Activated CD4-positive, alpha-beta T cell treated with anti-CD3 and anti-CD28 coated beads for 36 hours (primary cell): ENCODE measurements at regions of chr17 and their contacts with region 1.

Region 1: DNA sequence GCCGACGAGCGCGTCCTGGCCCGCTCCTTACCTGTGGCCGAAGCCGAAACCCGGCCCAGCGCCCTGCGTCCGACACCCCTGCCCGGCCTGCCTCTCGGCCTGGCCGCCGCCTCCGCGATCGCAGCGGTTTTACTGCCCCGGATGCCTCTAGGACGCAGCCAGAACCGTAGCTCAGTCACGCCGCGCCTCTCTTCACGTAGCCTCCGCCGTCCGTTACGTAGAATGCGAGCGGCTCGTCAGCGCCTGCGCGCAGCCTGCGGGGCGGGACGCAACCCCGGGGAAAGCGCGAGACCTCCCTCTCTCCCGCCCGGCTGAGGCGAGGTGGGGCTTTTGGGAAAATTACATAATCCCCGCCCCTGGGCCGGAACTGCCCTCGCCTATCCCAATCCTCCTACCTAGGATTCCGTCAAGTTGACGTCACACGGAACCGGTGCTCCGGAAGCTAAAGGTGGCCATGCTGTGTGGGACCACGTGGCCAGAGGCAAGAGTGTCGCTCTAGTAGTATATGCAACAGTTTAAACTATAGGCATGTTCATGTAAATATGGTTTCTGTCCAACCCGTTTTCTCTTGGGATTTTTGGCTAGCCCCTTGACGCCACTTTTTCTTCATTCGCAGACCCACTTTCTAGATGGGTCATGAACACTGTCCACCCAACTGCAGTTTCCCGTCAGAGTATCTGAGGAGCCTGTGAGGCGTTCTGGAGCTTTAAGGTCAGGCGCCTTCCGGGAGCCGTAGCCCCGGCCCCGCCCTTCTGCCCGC is at the start of gene CCDC47:
- DNase-seq: peak; percentile 99
- ATAC-seq: peak; percentile 83
- H3K4me3 Mint-ChIP-seq: peak within 1 kb of the TSS; percentile 98
- H3K27ac Mint-ChIP-seq: peak within 1 kb of the TSS; percentile 97
- H3K4me1 Mint-ChIP-seq: peaks cover 57% of the 10 kb centered on the region
- H3K27me3 Mint-ChIP-seq: no peaks in the 10 kb centered on the region
- total RNA-seq, gene CCDC47: 76.9 to 82.3 TPM

Region 2: GRCh38 chr17:63445979-63446691 is 327.4 kb before region 1 on chr17 and contains the start of gene CYB561:
- CTCF ChIA-PET with region 1: no interaction called
- POLR2A ChIA-PET with region 1: no interaction called
- intact Hi-C with region 1: loop called in 1 of 2 experiments (anchors 5 kb)
- DNase-seq: peak; percentile 81
- ATAC-seq: peak; percentile 69
- H3K4me3 Mint-ChIP-seq: peak within 1 kb of the TSS; percentile 60
- H3K27ac Mint-ChIP-seq: peak within 1 kb of the TSS; percentile 72
- H3K4me1 Mint-ChIP-seq: peaks cover 23% of the 10 kb centered on the region
- H3K27me3 Mint-ChIP-seq: peaks cover 3% of the 10 kb centered on the region
- total RNA-seq, gene CYB561: 2.5 to 3.0 TPM

Region 3: DNA sequence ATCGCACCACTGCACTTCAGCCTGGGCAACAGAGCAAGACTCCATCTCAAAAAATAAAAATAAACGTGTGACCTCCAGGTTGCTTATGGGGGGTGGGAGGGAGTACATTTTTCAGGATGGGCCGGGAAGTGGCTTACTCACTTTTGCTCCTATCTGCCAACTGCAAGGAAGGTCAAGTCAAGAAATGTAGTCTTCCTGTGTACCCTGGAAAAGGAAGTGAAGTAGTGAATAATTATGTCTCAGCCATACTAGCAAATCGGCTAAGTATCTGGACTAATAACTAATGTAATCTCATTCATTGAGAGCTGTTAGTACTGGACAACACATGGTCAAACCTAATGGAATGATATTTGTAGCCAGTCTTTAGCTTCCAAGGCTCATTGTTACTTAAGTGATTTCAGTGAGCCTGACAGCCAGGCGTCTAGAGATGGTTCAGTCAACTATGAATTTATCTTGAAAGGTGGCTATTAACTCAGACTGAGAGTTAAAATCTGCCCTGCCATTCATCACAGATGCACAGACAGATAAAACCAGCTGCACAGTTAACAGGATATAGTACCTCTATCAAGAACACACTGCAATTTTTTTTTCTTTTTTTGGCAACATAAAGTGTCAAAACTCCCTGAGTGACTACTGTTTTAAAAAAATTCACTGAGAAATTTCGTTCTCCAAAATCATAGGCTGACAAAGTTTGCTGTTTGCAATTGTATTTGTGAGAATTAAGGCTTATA is 176.5 kb before region 1 on chr17:
- CTCF ChIA-PET with region 1: no interaction called
- POLR2A ChIA-PET with region 1: no interaction called
- intact Hi-C with region 1: no loop called
- DNase-seq: no peak
- ATAC-seq: no peak
- H3K4me3 Mint-ChIP-seq: no peak overlapping the region
- H3K27ac Mint-ChIP-seq: peak overlapping the region; percentile 13
- H3K4me1 Mint-ChIP-seq: peaks cover 29% of the 10 kb centered on the region
- H3K27me3 Mint-ChIP-seq: no peaks in the 10 kb centered on the region

Region 4: DNA sequence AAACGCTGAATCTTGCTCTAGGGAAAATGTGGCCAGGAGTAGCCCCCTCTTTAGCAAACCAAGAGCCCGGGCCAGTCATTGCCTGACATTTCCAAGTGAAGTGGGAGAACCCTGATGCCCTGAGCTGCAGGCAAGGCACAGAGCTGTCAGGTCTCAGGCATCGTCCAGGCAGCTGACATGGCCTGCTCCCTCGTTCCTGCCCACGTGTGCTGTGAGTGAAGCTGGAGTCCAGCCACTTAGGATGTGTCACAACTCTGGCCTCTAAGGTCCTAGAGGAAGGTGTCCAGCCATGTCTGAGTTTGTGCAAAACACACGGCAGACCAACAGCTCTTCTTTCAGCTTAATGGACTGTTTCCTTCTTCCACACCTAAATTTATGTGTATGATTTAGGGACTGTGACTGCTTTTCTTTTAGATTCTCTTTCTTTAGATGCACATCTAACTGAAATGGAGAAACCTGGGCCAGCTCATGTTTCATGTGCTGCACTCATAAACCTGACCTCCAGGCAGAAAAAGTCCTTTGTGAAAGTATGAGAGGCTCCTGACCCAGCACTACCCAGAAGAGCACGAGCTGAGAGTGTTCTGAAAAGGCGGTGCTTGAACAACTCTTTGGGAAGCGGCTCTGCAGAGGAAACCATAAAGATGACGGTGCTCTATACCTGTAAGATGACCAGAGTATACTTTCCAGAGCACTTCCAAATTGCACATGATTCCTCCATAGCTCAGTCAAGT is 58.8 kb before region 1 on chr17:
- CTCF ChIA-PET with region 1: no interaction called
- POLR2A ChIA-PET with region 1: no interaction called
- intact Hi-C with region 1: no loop called
- DNase-seq: no peak
- ATAC-seq: no peak
- H3K4me3 Mint-ChIP-seq: no peak overlapping the region
- H3K27ac Mint-ChIP-seq: no peak overlapping the region
- H3K4me1 Mint-ChIP-seq: peaks cover 8% of the 10 kb centered on the region
- H3K27me3 Mint-ChIP-seq: no peaks in the 10 kb centered on the region

Region 5: DNA sequence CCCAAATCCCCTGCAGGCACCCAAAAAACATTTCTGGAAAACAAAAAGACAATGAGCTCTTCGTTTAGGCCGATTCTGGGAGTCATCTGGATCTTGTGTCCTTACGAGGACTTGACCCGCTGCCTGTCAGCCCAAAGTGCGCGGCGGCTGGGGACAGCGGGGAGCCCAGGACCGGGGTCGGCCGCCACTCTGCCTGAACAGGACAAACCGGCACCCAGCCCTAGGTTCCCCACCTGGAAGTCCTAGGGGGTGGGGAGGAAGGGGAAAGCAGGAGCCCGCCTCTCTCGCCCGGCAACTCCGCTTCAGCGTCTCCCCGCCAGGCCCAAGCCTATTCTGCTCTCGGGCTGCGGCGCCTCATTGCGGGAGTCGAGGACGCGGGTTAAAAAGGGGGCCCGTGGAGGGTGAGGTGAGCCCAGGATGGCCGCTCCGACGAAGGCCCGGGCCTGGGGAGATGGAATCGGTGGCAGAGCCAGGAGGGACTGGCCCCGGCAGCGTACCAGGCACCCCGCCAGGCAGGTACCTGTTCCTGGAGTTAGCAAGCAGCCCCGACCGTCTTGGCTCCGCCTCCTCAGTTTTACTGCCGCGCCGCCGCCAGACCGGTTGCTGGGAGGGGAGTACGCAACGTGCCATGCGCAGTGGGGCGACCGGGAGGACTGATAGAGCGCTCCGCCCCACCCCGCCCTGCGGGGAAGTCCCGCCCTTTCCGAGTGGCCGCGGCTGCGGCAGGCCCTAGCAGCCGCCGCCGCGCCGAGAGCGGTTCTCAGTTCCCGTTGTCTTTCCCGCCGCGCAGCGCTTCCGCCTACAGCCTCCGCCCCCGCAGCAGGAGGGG is 32.1 kb before region 1 on chr17 and contains the start of gene STRADA:
- CTCF ChIA-PET with region 1: interaction called, 3 read pairs
- POLR2A ChIA-PET with region 1: interaction called, 16 read pairs
- intact Hi-C with region 1: loop called (anchors 1 kb)
- DNase-seq: peak; percentile 100
- ATAC-seq: peak; percentile 94
- H3K4me3 Mint-ChIP-seq: peak within 1 kb of the TSS; percentile 91
- H3K27ac Mint-ChIP-seq: peak within 1 kb of the TSS; percentile 95
- H3K4me1 Mint-ChIP-seq: peaks cover 29% of the 10 kb centered on the region
- H3K27me3 Mint-ChIP-seq: no peaks in the 10 kb centered on the region
- total RNA-seq, gene STRADA: 51.0 to 53.6 TPM

Region 6: GRCh38 chr17:63827002-63827771 is 53.6 kb after region 1 on chr17 and contains the starts of genes FTSJ3 and PSMC5:
- CTCF ChIA-PET with region 1: interaction called, 5 read pairs
- POLR2A ChIA-PET with region 1: interaction called, 10 read pairs
- intact Hi-C with region 1: loop called (anchors 1 kb)
- DNase-seq: peak; percentile 97
- ATAC-seq: peak; percentile 94
- H3K4me3 Mint-ChIP-seq: peak within 1 kb of the TSS; percentile 88
- H3K27ac Mint-ChIP-seq: peak within 1 kb of the TSS; percentile 99
- H3K4me1 Mint-ChIP-seq: peaks cover 72% of the 10 kb centered on the region
- H3K27me3 Mint-ChIP-seq: no peaks in the 10 kb centered on the region
- total RNA-seq, gene FTSJ3: 52.1 to 61.2 TPM
- total RNA-seq, gene PSMC5: 98.2 to 160 TPM

Region 7: DNA sequence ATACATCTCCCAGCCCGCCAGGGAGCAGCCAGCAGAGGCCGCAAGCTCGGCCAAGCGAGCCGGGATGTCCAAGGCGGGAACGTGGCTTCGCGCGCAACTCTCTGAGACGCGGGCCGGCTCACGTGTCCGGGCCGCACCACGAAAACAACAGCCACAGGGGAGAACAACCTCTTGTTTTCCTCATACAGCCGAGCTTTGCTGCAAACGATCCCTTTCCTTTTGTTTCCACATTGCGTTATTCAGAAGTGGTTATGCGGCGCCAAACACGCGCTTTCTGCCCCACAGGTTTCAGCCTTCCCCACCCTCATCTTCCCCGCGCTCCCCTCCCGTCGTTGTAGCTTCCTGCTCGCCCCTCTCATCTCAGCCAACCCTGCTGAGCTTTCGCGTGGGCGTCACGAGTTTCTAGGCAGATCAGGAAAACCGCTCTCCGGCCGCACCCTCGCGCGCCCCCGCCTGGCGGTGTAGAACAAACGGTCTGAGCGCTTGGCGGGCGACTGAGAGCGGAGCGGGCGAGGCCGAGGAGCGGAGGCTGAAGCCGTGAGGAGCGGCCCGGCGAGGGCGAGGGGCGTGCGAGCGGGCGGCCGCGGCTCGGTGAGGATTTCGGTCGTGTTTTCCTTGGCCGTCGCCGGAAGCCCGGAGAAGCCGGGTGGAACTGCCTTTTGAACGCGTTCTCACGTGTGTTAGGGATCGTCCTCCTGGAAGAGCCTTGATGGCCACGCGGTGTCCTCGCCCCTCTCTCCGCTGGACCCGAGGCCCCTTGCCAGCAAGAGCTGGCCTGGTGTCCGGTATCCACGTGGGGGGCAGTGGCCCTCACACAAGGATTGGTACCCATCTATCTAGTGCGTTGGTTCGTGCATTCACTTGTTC is 75.5 kb after region 1 on chr17:
- CTCF ChIA-PET with region 1: interaction called, 4 read pairs
- POLR2A ChIA-PET with region 1: interaction called, 10 read pairs
- intact Hi-C with region 1: no loop called
- DNase-seq: peak; percentile 99
- ATAC-seq: peak; percentile 95
- H3K4me3 Mint-ChIP-seq: peak overlapping the region; percentile 43
- H3K27ac Mint-ChIP-seq: peak overlapping the region; percentile 93
- H3K4me1 Mint-ChIP-seq: peaks cover 20% of the 10 kb centered on the region
- H3K27me3 Mint-ChIP-seq: no peaks in the 10 kb centered on the region

Region 8: GRCh38 chr17:64020056-64020766 is 246.7 kb after region 1 on chr17 and contains the start of gene ICAM2:
- CTCF ChIA-PET with region 1: no interaction called
- POLR2A ChIA-PET with region 1: no interaction called
- intact Hi-C with region 1: loop called in 1 of 2 experiments (anchors 1 kb)
- DNase-seq: peak; percentile 92
- ATAC-seq: peak; percentile 73
- H3K4me3 Mint-ChIP-seq: peak within 1 kb of the TSS; percentile 84
- H3K27ac Mint-ChIP-seq: peak within 1 kb of the TSS; percentile 97
- H3K4me1 Mint-ChIP-seq: peaks cover 68% of the 10 kb centered on the region
- H3K27me3 Mint-ChIP-seq: no peaks in the 10 kb centered on the region
- total RNA-seq, gene ICAM2: 46.6 to 49.0 TPM